CD8-positive, alpha-beta T cell (primary cell): ENCODE measurements at regions of chr4 and their contacts with region 1.

Region 1: GRCh38 chr4:40301603-40302002 is 33.5 kb upstream of the CHRNA9 start:
- DNase-seq: peak; percentile 53 to 92 (median 77)
- ATAC-seq: peak; percentile 81
- H3K4me3 ChIP-seq: peak overlapping the region in 1 of 2 experiments; percentile 0
- H3K4me3 Mint-ChIP-seq: peak overlapping the region; percentile 65
- H3K27ac ChIP-seq: peak overlapping the region; percentile 46 to 75
- H3K27ac Mint-ChIP-seq: peak overlapping the region; percentile 98
- H3K4me1 ChIP-seq: peaks cover 91% of the 10 kb centered on the region
- H3K4me1 Mint-ChIP-seq: peaks cover 86% of the 10 kb centered on the region
- H3K27me3 ChIP-seq: no peaks in the 10 kb centered on the region
- H3K27me3 Mint-ChIP-seq: no peaks in the 10 kb centered on the region
- CTCF ChIP-seq: no peak

Region 2: DNA sequence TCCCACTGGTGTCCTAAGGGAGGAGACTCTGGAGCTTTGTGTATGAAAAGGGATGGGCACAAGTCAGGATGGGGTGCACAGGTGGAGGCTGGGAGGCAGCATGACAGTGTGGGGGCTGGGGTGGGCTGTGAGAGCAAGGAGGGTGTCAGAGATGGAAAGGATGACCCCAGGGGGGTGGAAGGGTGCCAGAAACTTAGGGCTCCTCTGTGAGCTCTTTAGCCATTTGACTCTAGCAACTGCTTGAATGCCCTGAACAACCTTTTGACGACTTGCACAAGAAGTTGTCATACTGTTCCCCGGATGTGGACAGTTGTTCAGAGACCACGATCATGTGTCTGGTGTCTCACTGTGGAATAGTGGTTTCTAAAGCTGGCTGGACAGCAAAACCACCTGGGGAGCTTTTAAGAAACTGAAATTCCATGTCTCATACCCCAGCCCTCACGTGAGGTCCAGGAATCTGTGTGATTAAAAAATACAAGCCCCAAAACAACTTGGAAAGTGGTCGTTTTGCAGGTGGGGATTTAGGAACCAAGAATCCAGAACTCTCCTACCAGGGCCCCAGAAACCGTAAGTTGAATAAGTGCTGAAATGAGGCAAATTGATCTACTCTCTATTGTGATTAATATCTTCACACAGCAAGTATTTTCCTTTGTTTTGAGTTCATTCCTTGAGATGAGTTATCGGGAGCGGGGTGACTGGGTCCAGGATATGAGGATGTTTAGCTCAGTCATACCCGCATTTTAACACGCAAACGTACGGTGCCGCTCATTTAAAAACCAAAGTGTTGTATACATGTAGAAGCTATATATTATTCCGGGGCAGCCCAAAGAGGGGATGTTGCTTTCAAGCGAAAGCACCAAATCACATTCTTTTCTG is 101.4 kb before region 1 on chr4:
- CTCF ChIA-PET with region 1: interaction called, 59 read pairs
- POLR2A ChIA-PET with region 1: interaction called, 33 read pairs
- intact Hi-C with region 1: no loop called
- DNase-seq: peak in 7 of 9 experiments; percentile 41 to 88 (median 67)
- ATAC-seq: peak; percentile 24
- H3K4me3 ChIP-seq: peak overlapping the region; percentile 83 to 87
- H3K4me3 Mint-ChIP-seq: peak overlapping the region; percentile 100
- H3K27ac ChIP-seq: peak overlapping the region; percentile 89 to 96
- H3K27ac Mint-ChIP-seq: peak overlapping the region; percentile 100
- H3K4me1 ChIP-seq: peaks cover 25% of the 10 kb centered on the region
- H3K4me1 Mint-ChIP-seq: peaks cover 41% of the 10 kb centered on the region
- H3K27me3 ChIP-seq: no peaks in the 10 kb centered on the region
- H3K27me3 Mint-ChIP-seq: no peaks in the 10 kb centered on the region
- CTCF ChIP-seq: no peak

Region 3: GRCh38 chr4:40205259-40206198 is 96.1 kb before region 1 on chr4:
- CTCF ChIA-PET with region 1: interaction called, 59 read pairs
- POLR2A ChIA-PET with region 1: interaction called, 33 read pairs
- intact Hi-C with region 1: loop called in 1 of 2 experiments (anchors 5 kb)
- DNase-seq: peak in 2 of 9 experiments; percentile 56 to 71
- ATAC-seq: peak; percentile 32
- H3K4me3 ChIP-seq: peak overlapping the region; percentile 30 to 83
- H3K4me3 Mint-ChIP-seq: peak overlapping the region; percentile 97
- H3K27ac ChIP-seq: peak overlapping the region; percentile 22 to 96
- H3K27ac Mint-ChIP-seq: peak overlapping the region; percentile 92
- H3K4me1 ChIP-seq: peaks cover 47% of the 10 kb centered on the region
- H3K4me1 Mint-ChIP-seq: peaks cover 70% of the 10 kb centered on the region
- H3K27me3 ChIP-seq: no peaks in the 10 kb centered on the region
- H3K27me3 Mint-ChIP-seq: no peaks in the 10 kb centered on the region
- CTCF ChIP-seq: no peak

Region 4: DNA sequence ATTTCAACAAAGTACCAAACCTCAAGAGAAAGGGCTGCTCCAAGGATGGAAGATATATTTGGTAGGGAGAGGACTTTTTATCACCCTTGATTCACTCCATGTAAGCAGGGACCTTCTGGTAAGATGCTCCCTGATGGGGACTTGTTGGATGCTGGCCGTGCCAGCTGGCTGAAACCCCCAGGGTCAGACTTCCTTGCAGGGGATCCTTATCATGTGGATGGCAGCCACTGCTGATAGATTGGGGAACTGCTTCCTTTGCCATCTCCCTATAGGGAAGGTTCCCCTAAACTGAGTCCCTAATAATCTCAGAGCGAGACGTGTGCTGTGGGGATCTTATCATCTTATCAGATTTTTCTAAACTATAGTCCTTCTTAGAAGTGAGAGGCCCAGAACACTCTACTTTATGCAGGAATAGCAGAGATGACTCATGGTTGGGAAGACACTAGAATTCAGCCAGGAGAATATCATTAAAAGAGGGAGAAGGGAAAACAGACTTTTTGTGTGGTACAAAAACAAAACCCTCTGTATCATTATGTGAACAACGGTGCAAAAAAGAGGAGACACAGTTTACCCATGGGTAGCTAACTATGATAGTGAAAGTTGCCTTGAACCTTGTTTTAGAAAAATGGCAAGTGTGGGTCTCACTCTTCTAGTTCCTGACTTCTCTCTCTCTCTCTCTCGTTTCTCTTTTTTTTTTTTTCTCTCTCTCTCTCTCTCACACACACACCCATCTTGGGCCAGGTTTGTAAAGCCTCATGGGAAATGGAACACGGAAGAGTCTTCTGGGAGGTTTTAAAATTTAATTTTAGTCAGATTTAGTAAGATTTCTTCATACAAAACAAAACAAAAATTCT is 88.7 kb before region 1 on chr4:
- CTCF ChIA-PET with region 1: interaction called, 59 read pairs
- POLR2A ChIA-PET with region 1: interaction called, 11 read pairs
- intact Hi-C with region 1: loop called in 1 of 2 experiments (anchors 5 kb)
- DNase-seq: peak in 1 of 9 experiments; percentile 59
- ATAC-seq: no peak
- H3K4me3 ChIP-seq: peak overlapping the region; percentile 5 to 31
- H3K4me3 Mint-ChIP-seq: peak overlapping the region; percentile 67
- H3K27ac ChIP-seq: peak overlapping the region; percentile 42 to 96
- H3K27ac Mint-ChIP-seq: peak overlapping the region; percentile 95
- H3K4me1 ChIP-seq: peaks cover 89% of the 10 kb centered on the region
- H3K4me1 Mint-ChIP-seq: peaks cover 93% of the 10 kb centered on the region
- H3K27me3 ChIP-seq: no peaks in the 10 kb centered on the region
- H3K27me3 Mint-ChIP-seq: no peaks in the 10 kb centered on the region
- CTCF ChIP-seq: no peak

Region 5: GRCh38 chr4:40283968-40284367 is 17.6 kb before region 1 on chr4:
- CTCF ChIA-PET with region 1: interaction called, 4 read pairs
- POLR2A ChIA-PET with region 1: interaction called, 15 read pairs
- intact Hi-C with region 1: loop called (anchors 1 to 2 kb)
- DNase-seq: peak; percentile 53 to 94 (median 76)
- ATAC-seq: peak; percentile 93
- H3K4me3 ChIP-seq: no peak overlapping the region
- H3K4me3 Mint-ChIP-seq: peak overlapping the region; percentile 62
- H3K27ac ChIP-seq: peak overlapping the region; percentile 27 to 89
- H3K27ac Mint-ChIP-seq: peak overlapping the region; percentile 97
- H3K4me1 ChIP-seq: peaks cover 51% of the 10 kb centered on the region
- H3K4me1 Mint-ChIP-seq: peaks cover 70% of the 10 kb centered on the region
- H3K27me3 ChIP-seq: no peaks in the 10 kb centered on the region
- H3K27me3 Mint-ChIP-seq: no peaks in the 10 kb centered on the region
- CTCF ChIP-seq: peak; percentile 54